Thyroid gland (tissue), 4 donors: ENCODE measurements at regions of chr1 and their contacts with region 1.

Region 1: GRCh38 chr1:180863158-180863775 is 49.4 kb upstream of the KIAA1614 start:
- DNase-seq: peak in 1 of 2 donors; percentile 4
- H3K4me3 ChIP-seq: no peak overlapping the region
- H3K27ac ChIP-seq: no peak overlapping the region
- H3K4me1 ChIP-seq: no peaks in the 10 kb centered on the region
- H3K27me3 ChIP-seq: no peaks in the 10 kb centered on the region
- CTCF ChIP-seq: peak; percentile 34 to 83 (median 55)
- POLR2A ChIP-seq: no peak

Region 2: DNA sequence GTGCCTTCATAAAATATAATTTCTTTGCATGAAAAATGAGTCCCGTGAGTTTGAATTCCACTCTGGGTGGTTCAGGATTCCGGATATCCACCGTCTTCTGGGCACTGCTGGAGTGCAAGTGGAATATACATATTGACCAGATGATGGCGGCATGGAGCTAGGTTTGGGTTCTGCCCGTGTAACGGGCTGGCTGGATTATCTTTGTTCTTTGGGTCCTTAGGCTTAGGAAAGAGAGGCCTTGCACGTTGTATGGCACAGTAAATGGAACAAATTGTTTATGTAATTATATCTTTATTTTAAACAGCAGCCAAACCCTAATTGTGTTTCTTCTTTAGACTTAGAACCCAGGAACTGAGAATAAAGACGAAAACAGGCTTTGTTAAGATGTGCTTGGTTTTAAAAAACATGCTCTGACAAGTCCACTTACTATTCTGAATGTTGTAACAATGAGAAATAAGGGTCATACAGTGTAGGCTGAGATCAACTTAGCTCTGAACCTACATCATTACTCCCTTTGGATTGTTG is 347.3 kb before region 1 on chr1:
- intact Hi-C with region 1: loop called (anchors 5 kb)
- DNase-seq: peak; percentile 56 to 69
- H3K4me3 ChIP-seq: no peak overlapping the region
- H3K27ac ChIP-seq: no peak overlapping the region
- H3K4me1 ChIP-seq: no peaks in the 10 kb centered on the region
- H3K27me3 ChIP-seq: no peaks in the 10 kb centered on the region
- CTCF ChIP-seq: peak; percentile 45 to 88 (median 82)
- POLR2A ChIP-seq: no peak

Region 3: GRCh38 chr1:180533266-180533987 is 329.8 kb before region 1 on chr1:
- intact Hi-C with region 1: loop called (anchors 5 kb)
- DNase-seq: peak; percentile 76 to 86
- H3K4me3 ChIP-seq: no peak overlapping the region
- H3K27ac ChIP-seq: peak overlapping the region in 2 of 3 donors; percentile 11 to 33
- H3K4me1 ChIP-seq: peaks cover 4 to 14% of the 10 kb centered on the region in 2 donors
- H3K27me3 ChIP-seq: no peaks in the 10 kb centered on the region
- CTCF ChIP-seq: peak; percentile 46 to 95 (median 84)
- POLR2A ChIP-seq: no peak